PC-3 (cell line): ENCODE measurements at regions of chr13 and their contacts with region 1.

Region 1: GRCh38 chr13:110965038-110965754 is 50.3 kb upstream of the ANKRD10 start:
- DNase-seq: peak; percentile 91
- ATAC-seq: peak; percentile 92
- H3K4me3 ChIP-seq: no peak overlapping the region; the same call in 1 of the 2 replicates
- H3K27ac ChIP-seq: peak overlapping the region; percentile 94
- H3K4me1 ChIP-seq: peaks cover 24% of the 10 kb centered on the region
- H3K27me3 ChIP-seq: no peaks in the 10 kb centered on the region
- CTCF ChIP-seq: no peak

Region 2: GRCh38 chr13:110874508-110874960 is 90.7 kb before region 1 on chr13:
- CTCF ChIA-PET with region 1: no interaction called
- POLR2A ChIA-PET with region 1: no interaction called
- intact Hi-C with region 1: loop called (anchors 5 kb)
- DNase-seq: peak; percentile 70
- ATAC-seq: peak; percentile 61
- H3K4me3 ChIP-seq: peak overlapping the region; percentile 61
- H3K27ac ChIP-seq: no peak overlapping the region
- H3K4me1 ChIP-seq: peaks cover 24% of the 10 kb centered on the region
- H3K27me3 ChIP-seq: no peaks in the 10 kb centered on the region
- CTCF ChIP-seq: no peak

Region 3: GRCh38 chr13:110984381-110984780 is 19.2 kb after region 1 on chr13:
- CTCF ChIA-PET with region 1: no interaction called
- POLR2A ChIA-PET with region 1: no interaction called
- intact Hi-C with region 1: loop called (anchors 1 kb)
- DNase-seq: no peak
- ATAC-seq: no peak
- H3K4me3 ChIP-seq: no peak overlapping the region
- H3K27ac ChIP-seq: no peak overlapping the region
- H3K4me1 ChIP-seq: peaks cover 18% of the 10 kb centered on the region
- H3K27me3 ChIP-seq: no peaks in the 10 kb centered on the region
- CTCF ChIP-seq: no peak

Region 4: GRCh38 chr13:111006506-111007031 is 41.4 kb after region 1 on chr13:
- CTCF ChIA-PET with region 1: no interaction called
- POLR2A ChIA-PET with region 1: no interaction called
- intact Hi-C with region 1: loop called (anchors 1 kb)
- DNase-seq: no peak
- ATAC-seq: peak; percentile 25
- H3K4me3 ChIP-seq: no peak overlapping the region
- H3K27ac ChIP-seq: peak overlapping the region; percentile 67
- H3K4me1 ChIP-seq: peaks cover 18% of the 10 kb centered on the region
- H3K27me3 ChIP-seq: no peaks in the 10 kb centered on the region
- CTCF ChIP-seq: no peak

Region 5: GRCh38 chr13:111017755-111018459 is 52.7 kb after region 1 on chr13:
- CTCF ChIA-PET with region 1: no interaction called
- POLR2A ChIA-PET with region 1: no interaction called
- intact Hi-C with region 1: no loop called
- DNase-seq: no peak
- ATAC-seq: peak; percentile 45
- H3K4me3 ChIP-seq: no peak overlapping the region
- H3K27ac ChIP-seq: no peak overlapping the region
- H3K4me1 ChIP-seq: no peaks in the 10 kb centered on the region
- H3K27me3 ChIP-seq: no peaks in the 10 kb centered on the region
- CTCF ChIP-seq: no peak

Region 6: GRCh38 chr13:111129465-111130115 is 164.4 kb after region 1 on chr13:
- CTCF ChIA-PET with region 1: no interaction called
- POLR2A ChIA-PET with region 1: no interaction called
- intact Hi-C with region 1: no loop called
- DNase-seq: no peak
- ATAC-seq: no peak
- H3K4me3 ChIP-seq: no peak overlapping the region
- H3K27ac ChIP-seq: no peak overlapping the region
- H3K4me1 ChIP-seq: no peaks in the 10 kb centered on the region
- H3K27me3 ChIP-seq: peaks cover 52% of the 10 kb centered on the region
- CTCF ChIP-seq: no peak